PC-9 (cell line): ENCODE measurements at regions of chr7 and their contacts with region 1.

Region 1: GRCh38 chr7:135217645-135218509 is 6.6 kb upstream of the WDR91 start:
- DNase-seq: no peak
- H3K4me3 ChIP-seq: no peak overlapping the region
- H3K27ac ChIP-seq: no peak overlapping the region
- H3K4me1 ChIP-seq: no peaks in the 10 kb centered on the region
- H3K27me3 ChIP-seq: no peaks in the 10 kb centered on the region
- CTCF ChIP-seq: no peak

Region 2: GRCh38 chr7:134693261-134693660 is 524.6 kb before region 1 on chr7:
- CTCF ChIA-PET with region 1: no interaction called
- POLR2A ChIA-PET with region 1: no interaction called
- intact Hi-C with region 1: no loop called
- DNase-seq: no peak
- H3K4me3 ChIP-seq: no peak overlapping the region
- H3K27ac ChIP-seq: no peak overlapping the region
- H3K4me1 ChIP-seq: no peaks in the 10 kb centered on the region
- H3K27me3 ChIP-seq: no peaks in the 10 kb centered on the region
- CTCF ChIP-seq: no peak

Region 3: GRCh38 chr7:134720091-134720935 is 497.6 kb before region 1 on chr7:
- CTCF ChIA-PET with region 1: interaction called, 17 read pairs
- POLR2A ChIA-PET with region 1: no interaction called
- intact Hi-C with region 1: no loop called
- DNase-seq: no peak
- H3K4me3 ChIP-seq: no peak overlapping the region
- H3K27ac ChIP-seq: no peak overlapping the region
- H3K4me1 ChIP-seq: no peaks in the 10 kb centered on the region
- H3K27me3 ChIP-seq: no peaks in the 10 kb centered on the region
- CTCF ChIP-seq: no peak